Posterior vena cava (tissue), 2 donors: ENCODE measurements at regions of chr7 and their contacts with region 1.

Region 1: DNA sequence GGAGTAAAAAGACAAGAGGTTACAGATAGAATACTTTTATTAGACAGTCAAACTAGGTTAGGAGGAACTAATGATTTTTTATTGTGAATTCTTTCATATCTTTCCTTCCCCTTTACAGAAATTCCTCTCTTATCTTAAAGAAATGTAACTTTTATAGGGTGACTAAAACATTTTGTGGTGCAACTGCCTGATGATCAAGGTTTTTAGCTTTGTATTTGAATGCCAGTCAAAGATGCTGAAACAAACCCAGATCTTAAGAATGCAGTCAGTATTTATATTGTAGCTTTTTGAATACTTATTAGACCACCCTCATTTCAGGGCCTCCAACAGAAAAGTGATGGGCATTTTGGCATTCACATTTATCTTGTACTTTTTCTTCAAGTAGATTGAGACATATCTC is 27.4 kb downstream of the TAX1BP1 start:
- DNase-seq: no peak

Region 2: GRCh38 chr7:27210441-27211083 is 556.8 kb before region 1 on chr7:
- intact Hi-C with region 1: loop called in 1 of 2 experiments (anchors 10 kb)
- DNase-seq: peak; percentile 84

Region 3: GRCh38 chr7:27627146-27627545 is 140.2 kb before region 1 on chr7:
- intact Hi-C with region 1: no loop called
- DNase-seq: no peak